ENCODE measurements at regions of chr7 and their contacts with region 1.

Region 1: DNA sequence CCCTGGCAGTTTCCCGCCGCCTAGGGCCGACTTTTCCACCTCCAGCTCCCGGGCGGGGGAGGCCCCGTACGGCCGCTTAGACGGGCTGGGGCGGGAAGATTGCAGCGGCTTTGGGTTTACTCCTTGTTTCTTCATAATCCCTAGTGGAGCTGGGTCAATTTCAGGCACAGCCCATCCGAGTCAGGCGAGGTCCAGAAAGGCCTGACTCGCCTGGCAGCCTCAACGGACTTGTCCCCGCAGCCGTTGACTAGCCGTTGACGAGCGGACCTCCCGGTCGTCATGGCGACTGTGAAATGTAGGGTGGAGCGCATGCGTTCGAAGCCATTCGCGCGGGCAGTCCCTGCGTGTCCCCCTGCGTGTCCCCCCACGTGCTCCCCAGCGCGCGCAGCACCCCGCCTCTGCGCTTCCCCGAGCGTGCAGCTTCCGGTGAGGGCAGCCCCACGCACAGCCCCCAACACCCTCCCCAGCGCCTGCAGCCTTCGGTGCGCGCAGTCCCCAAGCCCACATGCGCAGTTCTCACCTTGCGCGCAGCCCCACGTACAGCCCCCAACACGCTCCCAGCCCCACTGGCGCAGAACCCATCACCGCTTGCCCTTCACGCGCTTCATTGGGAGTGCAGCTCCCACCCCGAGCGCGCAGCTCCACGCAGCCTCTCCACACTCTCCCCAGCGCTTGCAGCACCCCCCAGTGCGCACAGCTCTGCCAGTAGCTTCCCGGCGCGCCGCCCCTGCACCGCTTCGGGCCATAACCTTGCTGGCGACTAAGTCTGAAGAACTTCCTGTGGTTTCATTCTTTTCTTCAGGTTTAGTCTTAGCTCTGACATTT is 67.8 kb downstream of the TBX20 start:
- DNase-seq: peak; percentile 40
- ATAC-seq: peak; percentile 44
- H3K4me3 Mint-ChIP-seq: peak overlapping the region; percentile 56
- H3K27ac Mint-ChIP-seq: no peak overlapping the region
- H3K4me1 Mint-ChIP-seq: peaks cover 19% of the 10 kb centered on the region
- H3K27me3 Mint-ChIP-seq: peaks cover 29% of the 10 kb centered on the region

Region 2: GRCh38 chr7:35253710-35254495 is 67.8 kb after region 1 on chr7 and contains the start of gene TBX20:
- CTCF ChIA-PET with region 1: no interaction called
- POLR2A ChIA-PET with region 1: no interaction called
- intact Hi-C with region 1: loop called in 1 of 2 experiments (anchors 5 kb)
- DNase-seq: peak; percentile 65
- ATAC-seq: peak; percentile 82
- H3K4me3 Mint-ChIP-seq: peak within 1 kb of the TSS; percentile 51
- H3K27ac Mint-ChIP-seq: no peak within 1 kb of the TSS
- H3K4me1 Mint-ChIP-seq: peaks cover 16% of the 10 kb centered on the region
- H3K27me3 Mint-ChIP-seq: peaks cover 84% of the 10 kb centered on the region
- total RNA-seq, gene TBX20: 0.09 TPM in 1 of 2 experiments, not detected in the other

Region 3: GRCh38 chr7:35430547-35431153 is 244.5 kb after region 1 on chr7:
- CTCF ChIA-PET with region 1: no interaction called
- POLR2A ChIA-PET with region 1: no interaction called
- intact Hi-C with region 1: loop called in 1 of 2 experiments (anchors 10 kb)
- DNase-seq: peak; percentile 33
- ATAC-seq: peak; percentile 53
- H3K4me3 Mint-ChIP-seq: no peak overlapping the region
- H3K27ac Mint-ChIP-seq: no peak overlapping the region
- H3K4me1 Mint-ChIP-seq: no peaks in the 10 kb centered on the region
- H3K27me3 Mint-ChIP-seq: peaks cover 14% of the 10 kb centered on the region

Region 4: DNA sequence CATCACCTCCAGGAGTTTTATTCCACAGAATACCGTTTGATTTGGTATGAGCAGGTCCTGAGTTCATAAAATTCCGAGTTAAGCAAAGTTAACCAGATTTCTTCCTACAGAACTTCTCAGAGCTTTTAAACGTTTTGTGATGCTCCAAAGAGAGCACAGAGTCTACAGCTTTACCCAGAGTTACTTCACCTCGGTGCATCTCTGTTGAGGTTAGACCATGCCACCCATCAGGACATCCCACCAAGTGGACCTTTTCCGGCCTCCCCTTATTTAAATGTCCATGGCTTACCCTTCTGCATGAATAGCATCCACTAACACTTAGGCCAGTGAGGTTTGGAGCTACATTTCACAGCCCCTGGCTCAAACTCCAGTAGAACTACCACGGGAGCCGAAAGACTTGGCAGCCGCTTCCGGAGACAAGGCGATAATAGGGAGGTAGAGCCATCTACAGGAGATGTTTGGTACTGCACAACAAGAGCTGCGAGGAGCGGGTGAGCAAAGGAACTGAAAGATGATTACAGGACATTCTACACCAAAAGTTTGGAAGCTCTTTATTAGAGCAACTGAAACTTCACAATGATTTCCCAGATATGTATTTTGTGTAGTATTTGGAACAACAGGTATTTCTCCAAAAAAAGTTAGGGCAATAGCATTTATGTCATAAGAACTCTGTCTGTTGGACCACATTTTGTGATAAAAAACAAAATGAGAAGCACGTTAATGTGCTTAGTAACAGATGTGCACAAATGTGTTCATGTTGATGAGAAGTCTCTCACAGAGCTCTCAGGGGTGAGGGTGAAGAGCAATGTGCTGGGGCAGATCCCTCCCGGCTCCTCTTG is 334.1 kb after region 1 on chr7:
- CTCF ChIA-PET with region 1: interaction called, 3 read pairs
- POLR2A ChIA-PET with region 1: no interaction called
- intact Hi-C with region 1: loop called in 1 of 2 experiments (anchors 5 kb)
- DNase-seq: peak; percentile 73
- ATAC-seq: peak; percentile 72
- H3K4me3 Mint-ChIP-seq: no peak overlapping the region
- H3K27ac Mint-ChIP-seq: no peak overlapping the region
- H3K4me1 Mint-ChIP-seq: no peaks in the 10 kb centered on the region
- H3K27me3 Mint-ChIP-seq: peaks cover 12% of the 10 kb centered on the region

Region 5: GRCh38 chr7:35537067-35538023 is 351.2 kb after region 1 on chr7:
- CTCF ChIA-PET with region 1: interaction called, 3 read pairs
- POLR2A ChIA-PET with region 1: no interaction called
- intact Hi-C with region 1: loop called (anchors 5 kb)
- DNase-seq: peak; percentile 87
- ATAC-seq: peak; percentile 99
- H3K4me3 Mint-ChIP-seq: peak overlapping the region; percentile 56
- H3K27ac Mint-ChIP-seq: no peak overlapping the region
- H3K4me1 Mint-ChIP-seq: no peaks in the 10 kb centered on the region
- H3K27me3 Mint-ChIP-seq: peaks cover 9% of the 10 kb centered on the region

Region 6: GRCh38 chr7:35624299-35625186 is 438.4 kb after region 1 on chr7:
- CTCF ChIA-PET with region 1: no interaction called
- POLR2A ChIA-PET with region 1: no interaction called
- intact Hi-C with region 1: loop called (anchors 2 to 10 kb)
- DNase-seq: peak; percentile 54
- ATAC-seq: peak; percentile 95
- H3K4me3 Mint-ChIP-seq: no peak overlapping the region
- H3K27ac Mint-ChIP-seq: no peak overlapping the region
- H3K4me1 Mint-ChIP-seq: peaks cover 2% of the 10 kb centered on the region
- H3K27me3 Mint-ChIP-seq: no peaks in the 10 kb centered on the region

Measured in activated CD4-positive, alpha-beta T cell treated with anti-CD3 and anti-CD28 coated beads for 36 hours (primary cell).